Endothelial cell of umbilical vein (primary cell): ENCODE measurements at regions of chr1 and their contacts with region 1.

Region 1: GRCh38 chr1:116377541-116378529 is 4.8 kb downstream of the ATP1A1 start:
- DNase-seq: peak; percentile 94
- H3K4me3 ChIP-seq: peak overlapping the region in 1 of 3 experiments; percentile 94
- H3K27ac ChIP-seq: peak overlapping the region; percentile 96
- H3K4me1 ChIP-seq: peaks cover 70% of the 10 kb centered on the region
- H3K27me3 ChIP-seq: no peaks in the 10 kb centered on the region
- CTCF ChIP-seq: no peak
- POLR2A ChIP-seq: no peak

Region 2: DNA sequence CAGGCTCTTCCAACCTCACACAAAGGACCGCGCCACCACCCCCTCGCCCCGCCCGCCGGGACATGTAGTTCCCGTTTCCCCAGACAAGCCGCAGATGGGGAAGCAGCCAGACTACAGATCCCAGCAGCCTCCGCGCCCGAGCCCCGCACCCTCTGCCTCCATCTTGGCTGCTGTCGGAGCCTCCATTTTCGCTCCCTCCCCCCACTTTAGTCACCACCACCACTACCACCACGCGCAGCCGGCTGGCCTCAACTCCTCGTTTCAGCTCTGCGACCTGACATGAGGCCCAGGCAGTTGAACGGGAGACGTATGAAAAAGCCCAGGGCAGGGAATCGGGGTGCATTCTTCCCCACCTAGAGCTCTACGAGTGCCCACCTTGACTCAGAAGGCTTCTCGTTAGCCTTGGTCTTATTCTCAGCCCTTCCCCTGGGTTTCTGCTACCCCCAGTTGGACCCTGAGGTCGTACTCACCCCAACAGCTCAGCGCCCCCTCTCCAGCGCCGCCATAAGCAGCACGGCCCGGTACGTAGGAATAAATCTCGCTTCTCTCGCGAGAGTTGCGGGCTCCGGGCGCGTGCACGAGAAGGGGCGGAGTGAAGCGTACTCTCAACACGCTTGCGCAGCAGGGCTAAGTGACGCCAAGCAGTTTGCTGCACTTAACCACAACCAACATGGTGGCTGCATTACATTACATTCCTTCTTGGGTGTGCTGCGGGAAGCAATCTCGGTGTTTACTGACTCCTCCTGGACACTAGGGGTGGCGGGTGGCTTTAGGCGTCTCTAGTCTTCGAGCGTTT is 1620.2 kb before region 1 on chr1 and contains the start of gene CSDE1:
- CTCF ChIA-PET with region 1: no interaction called
- POLR2A ChIA-PET with region 1: no interaction called
- dilution Hi-C with region 1: no loop called
- intact Hi-C with region 1: loop called (anchors 5 kb)
- DNase-seq: peak; percentile 99
- H3K4me3 ChIP-seq: peak within 1 kb of the TSS; percentile 75 to 93 (median 91)
- H3K27ac ChIP-seq: peak within 1 kb of the TSS; percentile 98
- H3K4me1 ChIP-seq: peaks cover 28% of the 10 kb centered on the region
- H3K27me3 ChIP-seq: no peaks in the 10 kb centered on the region
- CTCF ChIP-seq: peak; percentile 31 to 36
- POLR2A ChIP-seq: peak; percentile 91
- total RNA-seq, gene CSDE1: 486 and 492 TPM in 2 replicates

Region 3: GRCh38 chr1:116151739-116152576 is 225.9 kb before region 1 on chr1:
- CTCF ChIA-PET with region 1: interaction called, 4 read pairs
- POLR2A ChIA-PET with region 1: no interaction called
- dilution Hi-C with region 1: no loop called
- intact Hi-C with region 1: loop called (anchors 1 kb)
- DNase-seq: peak; percentile 78
- H3K4me3 ChIP-seq: peak overlapping the region; percentile 34 to 42 (median 37)
- H3K27ac ChIP-seq: peak overlapping the region; percentile 84
- H3K4me1 ChIP-seq: peaks cover 16% of the 10 kb centered on the region
- H3K27me3 ChIP-seq: peaks cover 5 to 9% of the 10 kb centered on the region in 2 experiments
- CTCF ChIP-seq: peak; percentile 88 to 90
- POLR2A ChIP-seq: no peak

Region 4: GRCh38 chr1:116360429-116361173 is 17.2 kb before region 1 on chr1:
- CTCF ChIA-PET with region 1: interaction called, 11 read pairs
- POLR2A ChIA-PET with region 1: interaction called, 3 read pairs
- dilution Hi-C with region 1: no loop called
- intact Hi-C with region 1: loop called (anchors 2 kb)
- DNase-seq: peak; percentile 65
- H3K4me3 ChIP-seq: no peak overlapping the region
- H3K27ac ChIP-seq: no peak overlapping the region
- H3K4me1 ChIP-seq: peaks cover 21% of the 10 kb centered on the region
- H3K27me3 ChIP-seq: peaks cover 0 to 3% of the 10 kb centered on the region in 2 experiments
- CTCF ChIP-seq: peak; percentile 26 to 27
- POLR2A ChIP-seq: no peak

Region 5: DNA sequence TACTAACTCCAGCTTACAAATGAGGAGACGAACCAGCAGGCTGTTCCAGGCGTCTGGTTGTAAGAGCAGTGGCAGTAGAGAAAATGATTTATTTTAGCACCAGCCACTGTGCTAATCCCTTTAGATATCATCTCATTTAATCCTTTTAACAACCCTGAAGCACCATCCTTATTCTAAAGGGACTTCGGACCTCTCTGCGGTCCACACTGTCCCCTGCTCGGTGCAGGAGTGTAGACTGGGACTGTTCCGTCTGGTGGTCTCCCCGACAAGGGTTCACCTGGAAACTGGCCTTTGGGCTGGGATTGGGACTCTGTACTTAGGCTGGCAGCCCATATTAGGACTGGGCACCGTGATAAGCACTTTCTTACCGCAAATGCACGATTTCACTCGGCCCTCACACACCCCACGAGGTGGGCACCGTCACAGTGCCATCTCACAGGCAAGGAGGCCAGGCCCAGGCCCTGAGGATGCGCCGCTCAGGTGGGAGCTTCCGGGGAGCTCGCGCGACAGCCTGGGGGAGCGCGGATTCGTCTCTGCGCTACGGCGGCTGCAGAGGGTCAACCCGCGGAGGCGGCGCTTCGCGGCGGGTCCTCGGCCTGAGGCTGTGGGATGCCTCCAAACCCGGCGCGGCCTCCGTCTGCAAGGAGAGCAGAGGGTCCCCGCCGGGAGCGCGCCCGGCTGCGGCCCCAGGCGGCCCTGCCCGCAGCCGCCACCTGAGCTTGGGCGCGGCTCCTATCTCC is 40.4 kb after region 1 on chr1:
- CTCF ChIA-PET with region 1: no interaction called
- POLR2A ChIA-PET with region 1: interaction called, 3 read pairs
- dilution Hi-C with region 1: no loop called
- intact Hi-C with region 1: loop called (anchors 2 kb)
- DNase-seq: peak; percentile 72
- H3K4me3 ChIP-seq: peak overlapping the region; percentile 61 to 89 (median 80)
- H3K27ac ChIP-seq: peak overlapping the region; percentile 42
- H3K4me1 ChIP-seq: peaks cover 11% of the 10 kb centered on the region
- H3K27me3 ChIP-seq: no peaks in the 10 kb centered on the region
- CTCF ChIP-seq: no peak
- POLR2A ChIP-seq: no peak

Region 6: GRCh38 chr1:116435806-116436610 is 58.2 kb after region 1 on chr1:
- CTCF ChIA-PET with region 1: no interaction called
- POLR2A ChIA-PET with region 1: no interaction called
- dilution Hi-C with region 1: no loop called
- intact Hi-C with region 1: loop called (anchors 1 kb)
- DNase-seq: no peak
- H3K4me3 ChIP-seq: no peak overlapping the region
- H3K27ac ChIP-seq: no peak overlapping the region
- H3K4me1 ChIP-seq: peaks cover 24% of the 10 kb centered on the region
- H3K27me3 ChIP-seq: no peaks in the 10 kb centered on the region
- CTCF ChIP-seq: no peak
- POLR2A ChIP-seq: no peak

Region 7: GRCh38 chr1:117821782-117822447 is 1444.1 kb after region 1 on chr1:
- CTCF ChIA-PET with region 1: no interaction called
- POLR2A ChIA-PET with region 1: no interaction called
- dilution Hi-C with region 1: no loop called
- intact Hi-C with region 1: loop called (anchors 5 kb)
- DNase-seq: peak; percentile 98
- H3K4me3 ChIP-seq: no peak overlapping the region
- H3K27ac ChIP-seq: peak overlapping the region; percentile 82
- H3K4me1 ChIP-seq: peaks cover 39% of the 10 kb centered on the region
- H3K27me3 ChIP-seq: no peaks in the 10 kb centered on the region
- CTCF ChIP-seq: no peak
- POLR2A ChIP-seq: peak; percentile 49